Pancreas (tissue), 10 donors: ENCODE measurements at regions of chr17 and their contacts with region 1.

Region 1: GRCh38 chr17:21149621-21150020 is 22.9 kb downstream of the DHRS7B start:
- DNase-seq: no peak
- ATAC-seq: no peak
- H3K4me3 ChIP-seq: no peak overlapping the region
- H3K27ac ChIP-seq: no peak overlapping the region
- H3K4me1 ChIP-seq: no peaks in the 10 kb centered on the region
- H3K27me3 ChIP-seq: no peaks in the 10 kb centered on the region
- CTCF ChIP-seq: no peak

Region 2: GRCh38 chr17:21098934-21099689 is 50.5 kb before region 1 on chr17:
- intact Hi-C with region 1: loop called in 1 of 3 experiments (anchors 10 kb)
- DNase-seq: peak in 1 of 6 donors; percentile 16
- ATAC-seq: peak; percentile 83 to 91 (median 90)
- H3K4me3 ChIP-seq: peak overlapping the region in 3 of 4 donors; percentile 20 to 46 (median 23)
- H3K27ac ChIP-seq: no peak overlapping the region
- H3K4me1 ChIP-seq: peaks cover 0 to 6% (median 0%) of the 10 kb centered on the region in 3 donors
- H3K27me3 ChIP-seq: no peaks in the 10 kb centered on the region
- CTCF ChIP-seq: no peak

Region 3: GRCh38 chr17:21313320-21313719 is 163.7 kb after region 1 on chr17:
- intact Hi-C with region 1: no loop called
- DNase-seq: peak in 1 of 6 donors; percentile 5
- ATAC-seq: no peak
- H3K4me3 ChIP-seq: no peak overlapping the region
- H3K27ac ChIP-seq: no peak overlapping the region
- H3K4me1 ChIP-seq: peaks cover 0 to 5% (median 0%) of the 10 kb centered on the region in 3 donors
- H3K27me3 ChIP-seq: no peaks in the 10 kb centered on the region
- CTCF ChIP-seq: no peak